Activated CD4-positive, alpha-beta T cell treated with anti-CD3 and anti-CD28 coated beads for 36 hours (primary cell): ENCODE measurements at regions of chr1 and their contacts with region 1.

Region 1: DNA sequence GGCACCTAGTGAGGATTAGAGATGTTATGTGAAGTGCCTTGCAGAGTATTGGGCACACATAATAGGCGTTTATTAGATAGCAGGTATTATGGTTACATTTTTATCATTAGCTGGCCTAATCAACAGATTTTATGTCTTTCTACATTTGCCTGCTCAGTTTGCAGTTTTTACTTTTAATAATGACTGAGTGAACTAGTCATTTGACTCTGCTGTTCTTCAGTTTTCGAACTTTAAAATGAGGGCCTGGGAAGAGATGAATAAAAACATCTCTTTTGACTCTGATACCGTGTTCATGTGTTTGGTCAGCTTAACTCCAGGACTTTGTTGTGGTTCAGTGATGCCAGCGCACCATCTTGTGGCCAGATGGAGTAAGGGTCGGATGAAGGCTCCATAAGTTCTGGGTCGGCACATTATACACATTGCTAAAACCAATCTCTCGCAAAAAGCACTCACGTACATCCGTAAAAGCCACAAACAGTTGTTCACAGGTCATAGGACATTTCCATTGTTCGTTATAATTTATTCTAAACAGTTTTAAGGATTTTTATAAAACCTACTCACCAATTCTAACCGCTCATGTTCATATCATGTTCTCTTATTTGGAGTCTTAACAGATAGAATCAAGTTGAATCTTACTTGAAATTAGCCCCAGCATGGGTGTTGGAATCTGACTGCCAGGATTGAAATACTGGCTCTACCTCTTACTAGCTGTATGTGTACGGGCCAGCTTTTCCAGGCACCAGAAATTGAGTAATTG is 78.4 kb upstream of the GPR88 start:
- DNase-seq: peak; percentile 86
- ATAC-seq: peak; percentile 85
- H3K4me3 Mint-ChIP-seq: no peak overlapping the region
- H3K27ac Mint-ChIP-seq: no peak overlapping the region
- H3K4me1 Mint-ChIP-seq: peaks cover 50% of the 10 kb centered on the region
- H3K27me3 Mint-ChIP-seq: no peaks in the 10 kb centered on the region

Region 2: GRCh38 chr1:99808391-99809115 is 651.0 kb before region 1 on chr1:
- CTCF ChIA-PET with region 1: interaction called, 5 read pairs
- POLR2A ChIA-PET with region 1: no interaction called
- intact Hi-C with region 1: loop called (anchors 1 kb)
- DNase-seq: peak; percentile 47
- ATAC-seq: peak; percentile 93
- H3K4me3 Mint-ChIP-seq: no peak overlapping the region
- H3K27ac Mint-ChIP-seq: peak overlapping the region; percentile 75
- H3K4me1 Mint-ChIP-seq: peaks cover 11% of the 10 kb centered on the region
- H3K27me3 Mint-ChIP-seq: peaks cover 9% of the 10 kb centered on the region

Region 3: DNA sequence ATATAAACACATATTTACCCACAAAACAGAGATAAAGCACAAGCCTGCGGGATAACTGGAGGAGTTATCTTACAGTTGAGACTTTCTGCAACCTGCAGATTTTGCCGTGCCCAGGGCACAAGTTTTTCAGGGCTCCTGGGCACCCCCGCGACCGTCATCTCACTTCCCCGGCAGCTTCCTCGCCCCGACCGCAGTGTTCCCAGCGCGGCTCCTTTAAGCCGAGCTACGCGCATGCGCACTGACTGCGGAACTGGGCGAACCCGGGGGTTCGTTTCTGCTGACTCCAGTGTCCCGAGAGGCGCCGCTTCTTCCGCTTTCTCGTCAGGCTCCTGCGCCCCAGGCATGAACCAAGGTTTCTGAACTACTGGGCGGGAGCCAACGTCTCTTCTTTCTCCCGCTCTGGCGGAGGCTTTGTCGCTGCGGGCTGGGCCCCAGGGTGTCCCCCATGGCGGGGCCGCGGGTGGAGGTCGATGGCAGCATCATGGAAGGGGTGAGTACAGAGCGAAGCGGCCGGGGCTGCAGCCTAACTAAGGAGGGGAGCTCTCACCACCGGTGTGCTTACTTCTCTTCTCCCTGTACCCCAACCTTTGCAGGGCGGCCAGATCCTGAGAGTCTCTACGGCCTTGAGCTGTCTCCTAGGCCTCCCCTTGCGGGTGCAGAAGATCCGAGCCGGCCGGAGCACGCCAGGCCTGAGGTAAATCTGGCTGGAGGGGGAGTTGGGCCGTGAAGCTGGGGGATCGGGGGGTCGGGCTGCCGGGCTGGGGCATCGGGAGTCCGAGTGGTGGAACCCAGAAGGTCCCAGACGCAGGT is 193.4 kb before region 1 on chr1 and contains the start of gene RTCA:
- CTCF ChIA-PET with region 1: interaction called, 9 read pairs
- POLR2A ChIA-PET with region 1: no interaction called
- intact Hi-C with region 1: loop called in 1 of 2 experiments (anchors 1 kb)
- DNase-seq: peak; percentile 97
- ATAC-seq: peak; percentile 93
- H3K4me3 Mint-ChIP-seq: peak within 1 kb of the TSS; percentile 100
- H3K27ac Mint-ChIP-seq: peak within 1 kb of the TSS; percentile 99
- H3K4me1 Mint-ChIP-seq: peaks cover 32% of the 10 kb centered on the region
- H3K27me3 Mint-ChIP-seq: no peaks in the 10 kb centered on the region
- total RNA-seq, gene RTCA: 47.8 to 53.0 TPM

Region 4: GRCh38 chr1:100351095-100351891 is 108.2 kb before region 1 on chr1:
- CTCF ChIA-PET with region 1: interaction called, 44 read pairs
- POLR2A ChIA-PET with region 1: interaction called, 3 read pairs
- intact Hi-C with region 1: loop called in 1 of 2 experiments (anchors 1 kb)
- DNase-seq: peak; percentile 94
- ATAC-seq: peak; percentile 77
- H3K4me3 Mint-ChIP-seq: peak overlapping the region; percentile 97
- H3K27ac Mint-ChIP-seq: peak overlapping the region; percentile 97
- H3K4me1 Mint-ChIP-seq: peaks cover 25% of the 10 kb centered on the region
- H3K27me3 Mint-ChIP-seq: no peaks in the 10 kb centered on the region

Region 5: DNA sequence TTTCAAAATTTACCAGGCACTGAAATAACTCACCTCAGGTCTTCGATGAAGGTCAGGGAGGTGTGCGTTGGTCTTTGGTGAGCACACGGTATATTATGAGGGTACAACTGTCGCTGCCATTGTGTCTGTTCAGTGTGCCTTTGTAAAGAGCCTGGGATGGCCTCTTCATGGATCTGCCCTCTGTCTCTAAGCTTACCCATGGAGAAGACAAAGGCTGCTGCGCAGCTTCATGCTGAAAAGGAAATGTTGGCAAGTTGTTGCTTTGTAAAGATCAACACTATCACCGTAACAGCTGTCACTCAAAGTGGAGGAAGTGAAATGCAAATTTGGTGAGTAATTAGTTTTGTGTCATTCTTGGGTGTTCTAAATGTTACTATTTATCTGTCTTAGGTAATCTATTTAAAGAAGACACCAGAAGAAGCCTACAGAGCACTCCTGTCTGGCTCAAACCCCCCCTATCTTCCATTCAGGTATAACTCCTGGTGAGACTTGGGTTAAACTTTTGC is 35.7 kb before region 1 on chr1:
- CTCF ChIA-PET with region 1: interaction called, 14 read pairs
- POLR2A ChIA-PET with region 1: no interaction called
- intact Hi-C with region 1: no loop called
- DNase-seq: peak; percentile 28
- ATAC-seq: peak; percentile 66
- H3K4me3 Mint-ChIP-seq: peak overlapping the region; percentile 50
- H3K27ac Mint-ChIP-seq: peak overlapping the region; percentile 75
- H3K4me1 Mint-ChIP-seq: peaks cover 74% of the 10 kb centered on the region
- H3K27me3 Mint-ChIP-seq: no peaks in the 10 kb centered on the region

Region 6: DNA sequence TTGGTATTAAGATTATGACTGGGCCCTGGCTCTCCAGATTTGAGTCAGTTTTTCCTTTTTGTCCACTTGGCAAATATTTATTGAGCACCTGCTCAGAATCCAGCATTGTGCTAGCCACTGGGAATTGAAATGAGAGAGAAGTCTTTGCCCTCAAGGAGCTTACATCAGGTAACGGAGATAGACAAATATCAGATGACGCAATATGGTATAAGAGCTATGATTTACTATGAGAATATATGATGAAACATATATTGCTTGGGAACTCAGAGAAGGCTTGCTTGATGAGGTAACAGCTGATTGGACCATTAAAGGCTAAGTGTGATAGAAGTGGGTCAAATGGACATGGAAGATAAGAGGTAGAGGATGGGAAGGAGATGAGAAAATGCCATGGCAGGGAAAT is 37.4 kb after region 1 on chr1:
- CTCF ChIA-PET with region 1: interaction called, 11 read pairs
- POLR2A ChIA-PET with region 1: no interaction called
- intact Hi-C with region 1: no loop called
- DNase-seq: no peak
- ATAC-seq: no peak
- H3K4me3 Mint-ChIP-seq: no peak overlapping the region
- H3K27ac Mint-ChIP-seq: no peak overlapping the region
- H3K4me1 Mint-ChIP-seq: no peaks in the 10 kb centered on the region
- H3K27me3 Mint-ChIP-seq: no peaks in the 10 kb centered on the region

Region 7: GRCh38 chr1:101357444-101357986 is 898.0 kb after region 1 on chr1:
- CTCF ChIA-PET with region 1: no interaction called
- POLR2A ChIA-PET with region 1: no interaction called
- intact Hi-C with region 1: loop called in 1 of 2 experiments (anchors 10 kb)
- DNase-seq: peak; percentile 76
- ATAC-seq: peak; percentile 100
- H3K4me3 Mint-ChIP-seq: no peak overlapping the region
- H3K27ac Mint-ChIP-seq: no peak overlapping the region
- H3K4me1 Mint-ChIP-seq: peaks cover 8% of the 10 kb centered on the region
- H3K27me3 Mint-ChIP-seq: no peaks in the 10 kb centered on the region